ENCODE measurements at regions of chr20 and their contacts with region 1.

Region 1: DNA sequence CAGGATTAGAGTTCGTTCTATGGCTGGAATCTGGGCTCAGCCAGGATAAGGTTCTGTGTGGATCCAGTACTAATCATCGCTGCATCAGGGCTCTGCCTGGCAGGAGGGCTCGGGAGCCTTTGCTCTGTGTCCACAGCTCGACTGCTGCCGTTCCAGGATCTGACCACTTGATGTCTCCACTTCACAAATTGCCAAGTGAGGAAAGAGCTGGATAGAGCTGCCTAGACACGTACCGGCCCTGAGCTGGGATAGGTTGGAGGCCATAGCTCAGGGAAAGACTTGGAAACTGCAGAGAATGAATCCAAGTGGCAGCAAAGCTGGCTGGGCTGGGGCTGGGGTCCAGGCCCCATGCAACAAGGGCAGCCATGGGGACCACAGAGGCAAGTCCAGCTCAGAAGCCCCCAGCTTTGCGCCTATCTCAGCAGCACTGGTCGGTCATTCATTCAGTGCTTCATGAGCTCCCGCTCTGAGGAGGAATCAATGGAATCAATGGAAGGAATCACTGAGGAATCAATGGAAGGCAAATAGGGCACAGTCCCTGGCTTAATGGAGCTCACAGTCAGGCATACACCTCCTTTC is 38.0 kb upstream of the TOP1 start:
- DNase-seq: peak; percentile 70
- ATAC-seq: peak; percentile 87
- H3K4me3 ChIP-seq: peak overlapping the region; percentile 33; the same call in 1 of the 2 replicates
- H3K27ac ChIP-seq: peak overlapping the region; percentile 98
- H3K4me1 ChIP-seq: peaks cover 39% of the 10 kb centered on the region
- H3K27me3 ChIP-seq: no peaks in the 10 kb centered on the region
- CTCF ChIP-seq: peak; percentile 85 to 95 (median 90)
- EP300 ChIP-seq: no peak
- POLR2A ChIP-seq: no peak
- RAD21 ChIP-seq: peak; percentile 96

Region 2: GRCh38 chr20:40706977-40707582 is 283.6 kb before region 1 on chr20:
- CTCF ChIA-PET with region 1: no interaction called
- POLR2A ChIA-PET with region 1: no interaction called
- RAD21 ChIA-PET with region 1: no interaction called
- SMC1A ChIA-PET with region 1: no interaction called
- in situ Hi-C with region 1: no loop called
- intact Hi-C with region 1: no loop called
- DNase-seq: no peak
- ATAC-seq: peak; percentile 94
- H3K4me3 ChIP-seq: no peak overlapping the region
- H3K27ac ChIP-seq: no peak overlapping the region
- H3K4me1 ChIP-seq: peaks cover 2% of the 10 kb centered on the region; the same call in 1 of the 2 replicates
- H3K27me3 ChIP-seq: 0 out of 4 replicates have a peak, but pooled peaks cover 0 to 5% of the 10 kb centered on the region in 2 experiments
- CTCF ChIP-seq: 0 out of 6 replicates have a peak, but pooled peaks of 1 of the 3 experiments have one; percentile 17
- EP300 ChIP-seq: no peak
- POLR2A ChIP-seq: no peak
- RAD21 ChIP-seq: no peak

Region 3: DNA sequence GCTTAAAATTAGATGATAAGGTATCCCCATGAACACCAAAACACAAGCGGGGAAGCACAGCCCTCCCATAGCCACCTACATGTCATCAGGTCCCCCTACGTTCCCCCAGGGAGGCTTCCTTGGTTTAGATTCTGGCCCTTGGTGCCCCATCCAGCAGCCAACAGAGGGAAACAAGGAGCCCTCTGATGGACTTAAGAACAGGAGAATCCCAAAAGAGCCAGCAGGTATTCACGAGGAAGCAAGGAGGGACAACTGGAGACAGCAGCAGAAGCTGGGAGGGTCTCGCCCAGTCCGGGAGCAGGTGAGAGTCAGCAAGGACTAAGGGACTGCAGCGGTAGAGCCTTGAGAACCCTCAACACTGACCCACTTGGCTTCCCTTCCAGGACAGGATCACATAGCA is 20.4 kb before region 1 on chr20:
- CTCF ChIA-PET with region 1: interaction called, 77 read pairs
- POLR2A ChIA-PET with region 1: interaction called, 4 read pairs
- RAD21 ChIA-PET with region 1: interaction called, 51 read pairs
- SMC1A ChIA-PET with region 1: interaction called, 69 read pairs
- in situ Hi-C with region 1: no loop called
- intact Hi-C with region 1: loop called (anchors 1 kb)
- DNase-seq: no peak
- ATAC-seq: no peak
- H3K4me3 ChIP-seq: no peak overlapping the region
- H3K27ac ChIP-seq: no peak overlapping the region
- H3K4me1 ChIP-seq: no peaks in the 10 kb centered on the region
- H3K27me3 ChIP-seq: no peaks in the 10 kb centered on the region
- CTCF ChIP-seq: no peak
- EP300 ChIP-seq: no peak
- POLR2A ChIP-seq: no peak
- RAD21 ChIP-seq: no peak

Region 4: GRCh38 chr20:41017390-41018042 is 26.9 kb after region 1 on chr20:
- CTCF ChIA-PET with region 1: interaction called, 256 read pairs
- POLR2A ChIA-PET with region 1: interaction called, 106 read pairs
- RAD21 ChIA-PET with region 1: interaction called, 187 read pairs
- SMC1A ChIA-PET with region 1: interaction called, 333 read pairs
- in situ Hi-C with region 1: no loop called
- intact Hi-C with region 1: no loop called
- DNase-seq: no peak
- ATAC-seq: no peak
- H3K4me3 ChIP-seq: no peak overlapping the region
- H3K27ac ChIP-seq: no peak overlapping the region
- H3K4me1 ChIP-seq: peaks cover 13% of the 10 kb centered on the region
- H3K27me3 ChIP-seq: no peaks in the 10 kb centered on the region
- CTCF ChIP-seq: no peak
- EP300 ChIP-seq: no peak
- POLR2A ChIP-seq: no peak
- RAD21 ChIP-seq: no peak

Region 5: GRCh38 chr20:41047975-41048305 is 57.3 kb after region 1 on chr20:
- CTCF ChIA-PET with region 1: interaction called, 510 read pairs
- POLR2A ChIA-PET with region 1: interaction called, 28 read pairs
- RAD21 ChIA-PET with region 1: interaction called, 696 read pairs
- SMC1A ChIA-PET with region 1: interaction called, 456 read pairs
- in situ Hi-C with region 1: no loop called
- intact Hi-C with region 1: loop called (anchors 5 kb)
- DNase-seq: no peak
- ATAC-seq: peak; percentile 69
- H3K4me3 ChIP-seq: peak overlapping the region; percentile 64
- H3K27ac ChIP-seq: peak overlapping the region; percentile 76
- H3K4me1 ChIP-seq: peaks cover 44% of the 10 kb centered on the region
- H3K27me3 ChIP-seq: no peaks in the 10 kb centered on the region
- CTCF ChIP-seq: no peak
- EP300 ChIP-seq: no peak
- POLR2A ChIP-seq: no peak
- RAD21 ChIP-seq: no peak

Region 6: DNA sequence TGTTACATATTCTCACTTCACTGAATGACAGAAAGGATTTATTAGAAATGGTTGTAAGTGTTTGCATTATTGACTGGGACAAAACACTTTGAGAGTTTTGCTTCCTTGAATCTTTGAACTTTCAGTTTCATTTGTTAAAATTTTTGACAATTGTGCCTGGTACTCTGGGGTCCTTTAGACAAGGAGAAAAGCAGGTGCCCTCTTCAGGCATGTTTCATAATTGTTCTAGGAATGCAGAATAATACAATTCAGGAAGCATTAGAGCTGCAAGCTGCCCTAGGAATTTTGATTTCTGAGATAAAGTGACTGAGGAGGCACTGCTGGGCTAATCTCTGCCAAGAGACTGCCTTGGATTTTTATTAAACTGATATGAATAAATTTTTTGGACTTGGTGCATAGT is 87.7 kb after region 1 on chr20:
- CTCF ChIA-PET with region 1: interaction called, 88 read pairs
- POLR2A ChIA-PET with region 1: interaction called, 5 read pairs
- RAD21 ChIA-PET with region 1: interaction called, 51 read pairs
- SMC1A ChIA-PET with region 1: interaction called, 120 read pairs
- in situ Hi-C with region 1: no loop called
- intact Hi-C with region 1: loop called (anchors 1 kb)
- DNase-seq: peak; percentile 21
- ATAC-seq: peak; percentile 71
- H3K4me3 ChIP-seq: no peak overlapping the region
- H3K27ac ChIP-seq: no peak overlapping the region
- H3K4me1 ChIP-seq: peaks cover 12% of the 10 kb centered on the region
- H3K27me3 ChIP-seq: no peaks in the 10 kb centered on the region
- CTCF ChIP-seq: peak in 2 of 3 experiments; percentile 20 to 21; a peak in 1 of 6 replicates
- EP300 ChIP-seq: no peak
- POLR2A ChIP-seq: no peak
- RAD21 ChIP-seq: peak; percentile 50

Region 7: GRCh38 chr20:41136680-41137613 is 146.3 kb after region 1 on chr20 and contains the start of gene PLCG1:
- CTCF ChIA-PET with region 1: interaction called, 52 read pairs
- POLR2A ChIA-PET with region 1: interaction called, 14 read pairs
- RAD21 ChIA-PET with region 1: interaction called, 36 read pairs
- SMC1A ChIA-PET with region 1: interaction called, 33 read pairs
- in situ Hi-C with region 1: no loop called
- intact Hi-C with region 1: no loop called
- DNase-seq: no peak
- ATAC-seq: peak; percentile 63
- H3K4me3 ChIP-seq: peak within 1 kb of the TSS; percentile 81
- H3K27ac ChIP-seq: peak within 1 kb of the TSS; percentile 88
- H3K4me1 ChIP-seq: peaks cover 56% of the 10 kb centered on the region
- H3K27me3 ChIP-seq: no peaks in the 10 kb centered on the region
- CTCF ChIP-seq: no peak
- EP300 ChIP-seq: no peak
- POLR2A ChIP-seq: peak; percentile 65
- RAD21 ChIP-seq: no peak
- polyA plus RNA-seq, gene PLCG1: 2.6 to 3.0 TPM

Region 8: GRCh38 chr20:41232973-41233926 is 242.6 kb after region 1 on chr20:
- CTCF ChIA-PET with region 1: interaction called, 20 read pairs
- POLR2A ChIA-PET with region 1: no interaction called
- RAD21 ChIA-PET with region 1: interaction called, 8 read pairs
- SMC1A ChIA-PET with region 1: interaction called, 5 read pairs
- in situ Hi-C with region 1: no loop called
- intact Hi-C with region 1: no loop called
- DNase-seq: no peak
- ATAC-seq: no peak
- H3K4me3 ChIP-seq: no peak overlapping the region
- H3K27ac ChIP-seq: no peak overlapping the region
- H3K4me1 ChIP-seq: no peaks in the 10 kb centered on the region
- H3K27me3 ChIP-seq: no peaks in the 10 kb centered on the region
- CTCF ChIP-seq: no peak
- EP300 ChIP-seq: no peak
- POLR2A ChIP-seq: no peak
- RAD21 ChIP-seq: no peak